ENCODE measurements at regions of chr12 and their contacts with region 1.

Region 1: DNA sequence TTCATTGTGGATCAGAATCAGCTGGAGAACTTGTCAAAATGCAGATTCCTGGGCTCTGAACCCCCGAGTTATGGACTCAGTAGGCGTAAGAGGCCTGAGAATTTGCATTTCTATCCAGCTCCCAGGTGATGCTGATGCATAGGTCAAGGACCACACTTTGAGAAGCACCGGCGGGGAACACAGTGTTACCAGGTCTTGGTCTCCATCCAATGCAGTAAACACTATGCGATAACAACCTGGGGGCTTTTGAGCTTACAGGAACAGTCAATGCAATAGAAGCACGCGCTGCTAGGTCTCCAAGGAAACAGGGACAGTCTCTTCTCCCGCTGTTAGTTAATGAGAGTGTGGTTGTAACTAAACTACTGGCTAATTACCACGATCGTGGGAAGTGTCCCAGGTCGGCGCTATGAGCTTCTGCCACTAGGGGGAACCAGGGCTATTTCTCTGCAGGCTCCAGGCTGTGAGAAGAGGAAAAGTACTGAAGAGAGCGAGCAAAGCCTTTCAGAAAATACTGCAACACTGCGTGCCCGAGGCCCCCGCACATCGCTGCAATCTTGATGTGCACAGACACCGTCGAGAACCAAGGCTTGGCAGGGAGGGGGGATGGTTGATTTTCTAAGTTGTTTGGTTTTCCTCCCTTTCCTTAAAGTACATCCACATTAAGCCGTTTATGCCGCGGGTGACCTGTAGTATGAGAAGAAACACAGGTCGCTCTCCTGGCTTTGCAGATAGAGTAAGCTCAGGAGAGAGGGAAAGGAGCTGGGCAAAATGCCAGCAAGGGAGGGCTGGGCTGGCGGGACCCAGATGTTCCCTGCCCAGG is 52.0 kb upstream of the KCNA1 start:
- DNase-seq: peak; percentile 70
- H3K4me3 ChIP-seq: peak overlapping the region; percentile 22 to 28; a peak in 3 of 4 replicates
- H3K27ac ChIP-seq: no peak overlapping the region
- H3K4me1 ChIP-seq: peaks cover 0 to 7% of the 10 kb centered on the region in 2 experiments; a peak in 1 of 4 replicates
- H3K27me3 ChIP-seq: peaks cover 82% of the 10 kb centered on the region
- CTCF ChIP-seq: peak; percentile 95
- EP300 ChIP-seq: no peak
- RAD21 ChIP-seq: peak; percentile 67

Region 2: GRCh38 chr12:4392223-4392742 is 465.4 kb before region 1 on chr12:
- CTCF ChIA-PET with region 1: no interaction called
- POLR2A ChIA-PET with region 1: no interaction called
- DNase-seq: no peak
- H3K4me3 ChIP-seq: no peak overlapping the region
- H3K27ac ChIP-seq: no peak overlapping the region
- H3K4me1 ChIP-seq: peaks cover 0 to 7% of the 10 kb centered on the region in 2 experiments; a peak in 1 of 4 replicates
- H3K27me3 ChIP-seq: no peaks in the 10 kb centered on the region; the same call in 1 of the 2 replicates
- CTCF ChIP-seq: no peak
- EP300 ChIP-seq: no peak
- RAD21 ChIP-seq: no peak

Region 3: GRCh38 chr12:4843907-4844306 is 13.8 kb before region 1 on chr12:
- CTCF ChIA-PET with region 1: interaction called, 59 read pairs
- POLR2A ChIA-PET with region 1: no interaction called
- DNase-seq: no peak
- H3K4me3 ChIP-seq: no peak overlapping the region
- H3K27ac ChIP-seq: no peak overlapping the region
- H3K4me1 ChIP-seq: no peaks in the 10 kb centered on the region
- H3K27me3 ChIP-seq: peaks cover 20% of the 10 kb centered on the region; the same call in 1 of the 2 replicates
- CTCF ChIP-seq: no peak
- EP300 ChIP-seq: no peak
- RAD21 ChIP-seq: no peak

Region 4: DNA sequence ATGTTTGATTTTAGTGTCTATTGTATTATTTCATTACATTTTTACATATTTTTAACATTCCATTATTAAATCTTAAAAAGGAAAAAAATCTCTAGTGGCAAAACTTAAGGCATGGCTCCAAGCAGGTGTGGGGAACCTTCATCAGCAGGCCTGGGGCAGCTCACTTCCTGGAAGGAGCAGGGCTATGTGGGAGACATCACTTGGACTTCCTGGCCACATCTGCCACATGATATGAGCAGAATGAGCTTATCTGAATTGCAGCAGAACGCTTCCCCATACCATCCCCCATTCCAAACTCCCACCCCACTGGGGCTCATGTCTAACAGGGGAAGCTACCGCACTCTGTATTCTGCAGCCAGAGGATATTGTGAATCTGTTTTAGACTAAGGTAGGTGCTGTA is 17.0 kb after region 1 on chr12:
- CTCF ChIA-PET with region 1: interaction called, 32 read pairs
- POLR2A ChIA-PET with region 1: no interaction called
- DNase-seq: no peak
- H3K4me3 ChIP-seq: no peak overlapping the region
- H3K27ac ChIP-seq: no peak overlapping the region
- H3K4me1 ChIP-seq: no peaks in the 10 kb centered on the region
- H3K27me3 ChIP-seq: peaks cover 39% of the 10 kb centered on the region; the same call in 1 of the 2 replicates
- CTCF ChIP-seq: no peak
- EP300 ChIP-seq: no peak
- RAD21 ChIP-seq: no peak

Region 5: DNA sequence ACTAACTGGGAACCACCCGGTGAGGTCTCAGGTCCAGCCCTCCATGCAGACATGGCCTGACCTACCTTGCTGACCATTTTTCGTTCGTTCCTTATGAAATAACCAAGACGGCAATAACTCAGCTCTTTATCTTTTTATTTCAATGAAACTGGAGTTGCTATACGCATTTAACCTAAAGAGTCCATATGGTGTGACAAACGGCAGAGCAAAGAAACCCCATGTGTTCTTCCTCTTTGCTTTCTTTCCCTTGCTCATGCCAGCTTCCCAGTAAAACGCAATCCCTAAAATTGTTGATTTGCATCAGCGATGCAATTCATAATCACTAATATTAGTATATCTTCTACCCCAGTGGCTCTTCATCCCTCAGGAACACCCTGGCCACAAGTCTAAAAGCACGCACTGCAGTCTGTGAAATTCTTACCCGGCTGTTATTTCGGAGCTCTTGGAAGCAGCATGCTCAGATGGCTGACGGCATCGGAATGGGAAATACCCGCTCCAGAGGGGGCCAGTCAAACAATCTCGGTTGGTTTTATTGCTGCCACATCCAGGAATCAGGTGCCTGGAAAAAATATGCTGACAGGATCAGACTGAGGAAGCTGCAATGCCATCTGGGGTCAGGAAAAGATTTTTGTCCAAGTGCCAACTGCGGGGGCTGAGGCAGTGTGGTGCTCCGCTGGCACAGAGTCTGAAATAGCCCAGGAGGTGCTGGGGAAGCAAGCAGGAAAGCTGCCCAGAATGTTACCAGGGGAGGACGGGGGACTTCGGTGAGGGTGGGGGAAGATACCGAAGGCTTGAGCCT is 23.8 kb after region 1 on chr12:
- CTCF ChIA-PET with region 1: interaction called, 16 read pairs
- POLR2A ChIA-PET with region 1: no interaction called
- DNase-seq: no peak
- H3K4me3 ChIP-seq: no peak overlapping the region
- H3K27ac ChIP-seq: no peak overlapping the region
- H3K4me1 ChIP-seq: no peaks in the 10 kb centered on the region
- H3K27me3 ChIP-seq: peaks cover 23% of the 10 kb centered on the region; the same call in 1 of the 2 replicates
- CTCF ChIP-seq: no peak
- EP300 ChIP-seq: no peak
- RAD21 ChIP-seq: no peak

Region 6: DNA sequence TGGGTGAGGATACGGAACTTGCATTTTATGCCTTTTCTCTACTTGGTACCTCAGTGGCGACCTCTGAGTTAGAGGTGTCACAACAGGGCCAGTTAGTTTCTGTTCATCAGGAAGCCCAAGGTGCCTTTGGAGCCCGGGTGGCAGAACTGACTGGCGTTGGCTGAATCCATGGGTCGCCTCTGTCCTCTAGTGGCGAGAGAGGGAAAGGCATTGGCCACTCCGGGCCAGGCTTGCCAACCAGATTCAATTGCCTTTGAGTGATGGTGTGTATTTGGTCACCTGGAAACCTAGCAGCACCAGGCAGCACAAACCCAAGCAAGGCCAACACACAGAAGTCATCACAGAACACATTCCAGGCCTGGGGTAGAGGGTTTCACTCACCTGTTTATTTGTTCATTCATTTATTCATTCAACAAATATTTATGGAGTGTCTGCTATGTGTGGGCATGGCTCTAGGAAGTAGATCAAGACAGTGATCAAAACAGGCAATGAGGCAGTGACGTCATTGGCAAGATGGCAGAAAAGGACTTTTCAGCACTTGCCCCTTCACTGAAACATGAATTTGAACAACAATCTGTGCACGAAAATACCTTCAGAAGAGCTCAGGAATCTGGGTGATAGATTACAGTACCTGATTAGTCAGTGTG is 145.5 kb after region 1 on chr12:
- CTCF ChIA-PET with region 1: interaction called, 14 read pairs
- POLR2A ChIA-PET with region 1: no interaction called
- DNase-seq: peak; percentile 57
- H3K4me3 ChIP-seq: peak overlapping the region in 1 of 2 experiments; percentile 30; a peak in 1 of 4 replicates
- H3K27ac ChIP-seq: no peak overlapping the region
- H3K4me1 ChIP-seq: peaks cover 0 to 4% of the 10 kb centered on the region in 2 experiments; a peak in 1 of 4 replicates
- H3K27me3 ChIP-seq: peaks cover 21% of the 10 kb centered on the region
- CTCF ChIP-seq: peak; percentile 98
- EP300 ChIP-seq: no peak
- RAD21 ChIP-seq: peak; percentile 87

Region 7: DNA sequence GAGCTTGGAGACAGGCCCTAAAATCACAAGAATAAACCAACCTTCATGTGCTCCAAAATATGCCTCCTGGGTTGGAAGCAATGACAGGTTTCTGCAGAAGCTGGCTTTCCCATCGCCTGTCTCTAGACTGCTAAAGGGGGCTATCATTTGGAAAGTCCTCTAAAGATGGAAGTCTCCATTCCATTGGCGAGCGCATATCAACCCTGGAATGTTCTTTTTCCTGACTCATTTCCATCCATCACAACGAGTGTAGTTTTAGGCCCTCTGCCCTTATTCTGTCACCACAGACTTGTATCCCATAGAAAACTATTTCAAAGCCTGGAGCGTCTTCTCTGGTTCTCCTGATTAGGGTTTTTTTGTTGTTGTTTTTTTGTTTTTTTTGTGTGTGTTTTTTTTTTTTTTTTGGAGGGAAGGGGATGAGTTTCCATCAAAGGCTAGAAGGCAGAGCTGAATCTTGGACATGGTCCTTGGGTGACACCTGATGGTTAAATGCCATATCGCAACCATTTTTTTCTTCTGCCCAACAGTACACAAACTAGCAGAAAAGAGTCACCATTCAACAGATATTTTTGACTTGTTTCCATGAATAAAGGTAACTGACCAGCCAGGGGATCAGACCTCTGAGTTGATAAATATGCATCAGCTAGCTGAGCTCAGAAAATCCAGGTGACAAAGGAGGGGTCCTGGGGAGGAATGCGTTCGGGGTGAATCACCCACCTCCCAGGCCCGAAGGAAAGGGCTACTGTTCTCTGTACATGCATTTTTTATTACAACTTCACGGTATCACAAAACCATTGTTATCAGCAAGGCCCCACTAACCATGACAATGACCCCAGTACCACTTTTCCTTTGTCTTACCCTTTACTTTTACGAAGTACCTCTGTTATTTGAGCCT is 226.5 kb after region 1 on chr12:
- CTCF ChIA-PET with region 1: interaction called, 86 read pairs
- POLR2A ChIA-PET with region 1: no interaction called
- DNase-seq: peak; percentile 66
- H3K4me3 ChIP-seq: peak overlapping the region in 1 of 2 experiments; percentile 4; a peak in 1 of 4 replicates
- H3K27ac ChIP-seq: no peak overlapping the region
- H3K4me1 ChIP-seq: peaks cover 0 to 18% of the 10 kb centered on the region in 2 experiments; a peak in 3 of 4 replicates
- H3K27me3 ChIP-seq: peaks cover 15% of the 10 kb centered on the region; the same call in 1 of the 2 replicates
- CTCF ChIP-seq: peak; percentile 79
- EP300 ChIP-seq: no peak
- RAD21 ChIP-seq: peak; percentile 86